CD4-positive, alpha-beta T cell (primary cell): ENCODE measurements at regions of chr9 and their contacts with region 1.

Region 1: DNA sequence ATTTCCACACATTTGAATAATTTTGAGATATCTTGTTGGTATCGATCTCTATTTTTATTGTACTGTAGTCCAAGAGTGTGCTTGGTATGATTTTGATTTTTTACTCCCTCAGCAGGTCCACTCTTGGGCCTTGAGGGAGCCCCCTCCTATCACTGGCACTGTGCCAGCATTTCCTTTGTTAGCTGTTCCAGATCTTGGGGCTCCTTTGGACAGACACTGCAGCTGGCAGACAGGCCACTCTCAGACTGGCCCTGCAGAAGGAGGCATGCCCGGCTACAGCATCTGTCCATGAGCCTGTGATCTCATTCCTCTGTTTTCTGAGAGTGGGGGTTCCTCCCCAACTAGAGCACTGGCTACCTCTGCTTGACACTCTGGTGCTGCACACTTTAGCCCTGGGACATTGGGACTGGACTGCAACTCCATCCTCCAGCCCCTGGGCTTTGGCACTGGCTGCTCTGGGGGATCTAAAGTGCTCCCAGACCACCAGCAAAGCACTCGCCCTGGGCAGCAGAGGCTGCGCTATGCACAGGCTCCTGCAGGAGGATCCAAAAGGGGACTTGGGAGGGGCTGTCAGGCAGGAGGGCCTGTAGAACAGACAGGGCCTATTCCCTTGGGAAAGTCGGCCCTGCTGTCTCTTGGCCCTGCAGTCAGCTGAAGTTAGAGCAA is 271.3 kb upstream of the DMAC1 start:
- DNase-seq: no peak
- ATAC-seq: no peak
- H3K4me3 ChIP-seq: no peak overlapping the region
- H3K4me3 Mint-ChIP-seq: no peak overlapping the region
- H3K27ac ChIP-seq: no peak overlapping the region
- H3K27ac Mint-ChIP-seq: no peak overlapping the region
- H3K4me1 ChIP-seq: no peaks in the 10 kb centered on the region
- H3K4me1 Mint-ChIP-seq: no peaks in the 10 kb centered on the region
- H3K27me3 ChIP-seq: no peaks in the 10 kb centered on the region
- H3K27me3 Mint-ChIP-seq: no peaks in the 10 kb centered on the region
- CTCF ChIP-seq: no peak

Region 2: GRCh38 chr9:8012986-8013385 is 57.9 kb before region 1 on chr9:
- CTCF ChIA-PET with region 1: no interaction called
- POLR2A ChIA-PET with region 1: no interaction called
- intact Hi-C with region 1: no loop called
- DNase-seq: no peak
- ATAC-seq: no peak
- H3K4me3 ChIP-seq: no peak overlapping the region
- H3K4me3 Mint-ChIP-seq: no peak overlapping the region
- H3K27ac ChIP-seq: no peak overlapping the region
- H3K27ac Mint-ChIP-seq: no peak overlapping the region
- H3K4me1 ChIP-seq: no peaks in the 10 kb centered on the region
- H3K4me1 Mint-ChIP-seq: no peaks in the 10 kb centered on the region
- H3K27me3 ChIP-seq: no peaks in the 10 kb centered on the region
- H3K27me3 Mint-ChIP-seq: no peaks in the 10 kb centered on the region
- CTCF ChIP-seq: no peak

Region 3: DNA sequence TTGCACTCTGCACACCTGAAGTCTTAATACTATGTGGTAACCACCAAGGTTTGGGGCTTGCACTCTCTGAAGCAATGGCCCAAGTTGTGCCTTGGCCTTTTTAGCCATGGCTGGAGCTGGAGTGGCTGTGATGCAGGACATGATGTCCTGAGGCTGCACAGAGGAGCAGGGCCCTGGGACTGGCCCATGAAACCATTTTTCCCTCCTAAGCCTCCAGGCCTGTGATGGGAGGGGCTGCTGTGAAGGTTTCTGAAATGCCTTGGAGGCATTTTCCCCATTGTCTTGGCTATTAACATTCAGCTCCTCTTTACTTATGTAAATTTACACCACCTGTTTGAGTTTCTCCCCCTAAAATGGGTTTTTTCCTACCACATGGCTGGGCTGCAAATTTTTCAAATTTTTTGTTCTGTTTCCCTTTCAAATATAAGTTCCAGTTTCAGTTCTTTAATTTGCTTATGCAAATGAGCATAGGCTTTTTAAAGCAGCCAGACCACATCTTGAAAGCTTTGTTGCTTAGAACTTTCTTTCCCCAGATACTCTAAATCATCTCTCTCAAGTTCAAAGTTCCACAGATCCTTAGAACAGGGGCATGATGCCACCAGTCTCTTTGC is 33.9 kb before region 1 on chr9:
- CTCF ChIA-PET with region 1: no interaction called
- POLR2A ChIA-PET with region 1: no interaction called
- intact Hi-C with region 1: no loop called
- DNase-seq: no peak
- ATAC-seq: no peak
- H3K4me3 ChIP-seq: no peak overlapping the region
- H3K4me3 Mint-ChIP-seq: no peak overlapping the region
- H3K27ac ChIP-seq: no peak overlapping the region
- H3K27ac Mint-ChIP-seq: no peak overlapping the region
- H3K4me1 ChIP-seq: no peaks in the 10 kb centered on the region
- H3K4me1 Mint-ChIP-seq: no peaks in the 10 kb centered on the region
- H3K27me3 ChIP-seq: no peaks in the 10 kb centered on the region
- H3K27me3 Mint-ChIP-seq: no peaks in the 10 kb centered on the region
- CTCF ChIP-seq: no peak

Region 4: DNA sequence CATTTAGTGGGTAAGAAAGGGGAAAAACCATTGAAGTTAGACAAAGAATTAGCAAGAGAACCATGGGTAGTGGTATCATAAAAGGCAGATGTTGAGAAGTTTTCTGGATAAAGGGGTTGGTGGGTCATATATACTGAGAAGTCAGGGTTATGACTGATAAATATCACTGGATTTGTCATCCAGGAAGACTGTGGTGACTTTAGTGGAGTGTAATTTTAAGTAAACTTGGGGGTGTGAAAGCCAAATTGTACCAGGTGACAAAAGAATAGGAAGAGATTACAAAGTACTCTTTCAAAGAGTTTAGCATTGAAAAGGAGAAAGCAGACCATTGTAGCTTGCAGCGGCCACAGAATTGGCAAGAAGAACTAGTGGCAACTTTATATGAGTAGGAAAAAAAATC is 43.9 kb after region 1 on chr9:
- CTCF ChIA-PET with region 1: no interaction called
- POLR2A ChIA-PET with region 1: no interaction called
- intact Hi-C with region 1: loop called in 1 of 2 experiments (anchors 5 kb)
- DNase-seq: no peak
- ATAC-seq: no peak
- H3K4me3 ChIP-seq: no peak overlapping the region
- H3K4me3 Mint-ChIP-seq: no peak overlapping the region
- H3K27ac ChIP-seq: no peak overlapping the region
- H3K27ac Mint-ChIP-seq: no peak overlapping the region
- H3K4me1 ChIP-seq: no peaks in the 10 kb centered on the region
- H3K4me1 Mint-ChIP-seq: no peaks in the 10 kb centered on the region
- H3K27me3 ChIP-seq: no peaks in the 10 kb centered on the region
- H3K27me3 Mint-ChIP-seq: no peaks in the 10 kb centered on the region
- CTCF ChIP-seq: no peak